MCF 10A (cell line): ENCODE measurements at regions of chr10 and their contacts with region 1.

Region 1: DNA sequence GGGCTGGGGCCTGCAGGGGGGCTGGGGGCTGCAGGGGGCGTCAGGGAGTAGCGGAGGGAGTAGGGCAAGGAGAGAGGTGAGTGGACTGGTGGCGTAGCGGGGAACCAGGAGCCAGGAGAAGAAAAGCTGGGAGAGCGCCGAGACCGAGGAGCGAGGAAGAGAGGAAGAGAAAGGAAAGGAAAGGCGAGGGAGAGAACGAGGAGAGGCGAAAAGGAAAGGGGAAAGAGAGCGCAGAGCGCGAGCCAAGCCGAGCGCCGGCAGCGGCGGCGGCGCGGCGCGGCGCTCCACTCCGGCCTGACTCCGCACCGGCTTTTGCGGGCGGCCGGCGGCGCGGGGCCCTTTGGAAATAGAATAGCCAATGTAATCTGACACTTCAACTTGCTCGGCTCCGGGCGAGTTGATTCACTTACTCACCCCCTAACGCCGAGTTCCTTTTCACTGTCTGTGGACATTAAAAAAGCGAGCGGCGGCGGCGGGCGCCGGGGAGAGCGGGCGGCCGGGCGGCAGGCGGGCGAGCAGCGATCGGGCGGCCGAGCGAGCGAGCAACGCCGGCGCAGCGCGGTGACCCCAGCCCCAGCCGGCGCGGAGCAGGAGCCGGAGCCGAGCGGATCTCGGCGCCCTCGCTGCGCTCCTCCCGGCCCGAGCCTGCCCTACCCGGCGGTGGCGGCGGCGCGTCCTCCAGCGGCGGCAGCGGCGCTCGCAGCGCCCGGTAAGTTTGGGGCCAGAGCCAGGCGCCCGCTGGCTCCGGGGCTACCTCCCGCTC is at the start of gene ZMIZ1:
- DNase-seq: peak; percentile 95
- H3K4me3 Mint-ChIP-seq: peak within 1 kb of the TSS; percentile 84
- H3K27ac Mint-ChIP-seq: peak within 1 kb of the TSS; percentile 50
- H3K4me1 Mint-ChIP-seq: peaks cover 20% of the 10 kb centered on the region
- H3K27me3 Mint-ChIP-seq: no peaks in the 10 kb centered on the region
- CTCF ChIP-seq: peak; percentile 19
- total RNA-seq, gene ZMIZ1: 15.5 and 20.3 TPM in 2 replicates

Region 2: DNA sequence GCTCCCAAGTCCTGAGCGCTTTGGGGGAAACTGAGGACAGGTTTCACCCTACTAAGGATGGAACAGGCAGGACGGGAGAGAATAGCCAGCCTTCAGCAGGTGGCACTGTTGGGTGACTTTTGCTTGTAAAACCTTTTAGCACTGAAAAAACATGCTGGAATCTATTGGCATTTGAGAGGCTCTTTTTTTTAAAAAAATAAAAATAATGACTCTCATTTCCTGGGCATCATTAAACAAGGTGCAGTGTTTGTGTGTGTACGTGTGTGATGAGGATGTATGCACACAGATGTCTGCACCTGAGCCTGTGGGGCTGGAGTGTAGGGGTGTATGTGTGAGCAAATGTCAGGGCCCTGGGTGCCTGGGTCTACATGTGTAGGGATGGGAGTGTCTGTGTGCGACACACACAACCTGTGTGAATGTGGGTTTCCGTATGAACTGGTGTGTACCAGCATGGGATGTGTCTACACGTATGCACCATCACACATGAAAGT is 857.1 kb before region 1 on chr10:
- CTCF ChIA-PET with region 1: interaction called, 3 read pairs
- POLR2A ChIA-PET with region 1: interaction called, 3 read pairs
- intact Hi-C with region 1: loop called (anchors 2 kb)
- DNase-seq: peak; percentile 59
- H3K4me3 Mint-ChIP-seq: no peak overlapping the region
- H3K27ac Mint-ChIP-seq: peak overlapping the region; percentile 64
- H3K4me1 Mint-ChIP-seq: peaks cover 10% of the 10 kb centered on the region
- H3K27me3 Mint-ChIP-seq: peaks cover 34% of the 10 kb centered on the region
- CTCF ChIP-seq: peak; percentile 62

Region 3: DNA sequence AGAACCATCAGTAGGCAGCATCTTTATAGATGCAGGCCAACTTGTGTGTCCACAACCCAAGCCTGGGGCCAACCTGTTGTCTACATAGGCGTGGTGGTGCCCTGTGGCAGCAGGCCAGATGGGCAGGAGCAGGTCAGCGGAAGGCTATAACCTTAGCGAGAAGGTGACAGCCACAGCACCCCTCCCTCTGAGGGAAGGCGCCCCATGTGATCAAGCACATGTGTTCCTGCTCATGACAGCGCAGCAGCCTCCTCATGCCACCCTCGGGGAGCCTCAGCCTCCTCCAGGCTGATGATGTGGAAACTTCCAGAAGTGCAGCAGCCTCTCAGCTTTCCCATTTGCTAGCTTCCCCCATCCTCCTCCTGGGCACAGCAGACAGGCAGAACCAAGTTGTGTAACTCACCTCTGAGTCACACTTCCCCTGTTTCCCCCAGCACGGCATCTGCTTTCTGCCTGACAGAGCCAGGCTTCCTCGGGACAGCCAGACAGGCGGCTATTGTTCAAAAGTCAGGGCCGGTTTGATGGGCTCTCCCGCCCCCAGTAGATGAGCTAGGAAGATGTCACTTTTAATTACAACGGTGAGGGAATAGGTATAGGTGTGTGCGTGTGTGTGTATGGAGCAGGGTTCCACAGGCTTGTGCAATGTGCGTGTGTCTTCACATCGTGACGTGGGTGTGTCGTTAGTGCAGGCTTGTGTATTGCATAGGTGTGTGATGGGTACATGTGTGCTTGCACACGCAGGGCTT is 312.0 kb before region 1 on chr10:
- CTCF ChIA-PET with region 1: no interaction called
- POLR2A ChIA-PET with region 1: interaction called, 5 read pairs
- intact Hi-C with region 1: loop called (anchors 2 kb)
- DNase-seq: peak; percentile 98
- H3K4me3 Mint-ChIP-seq: peak overlapping the region; percentile 41
- H3K27ac Mint-ChIP-seq: peak overlapping the region; percentile 74
- H3K4me1 Mint-ChIP-seq: peaks cover 26% of the 10 kb centered on the region
- H3K27me3 Mint-ChIP-seq: peaks cover 26% of the 10 kb centered on the region
- CTCF ChIP-seq: no peak

Region 4: GRCh38 chr10:78953113-78953798 is 115.5 kb before region 1 on chr10:
- CTCF ChIA-PET with region 1: interaction called, 5 read pairs
- POLR2A ChIA-PET with region 1: interaction called, 14 read pairs
- intact Hi-C with region 1: no loop called
- DNase-seq: no peak
- H3K4me3 Mint-ChIP-seq: no peak overlapping the region
- H3K27ac Mint-ChIP-seq: no peak overlapping the region
- H3K4me1 Mint-ChIP-seq: peaks cover 39% of the 10 kb centered on the region
- H3K27me3 Mint-ChIP-seq: no peaks in the 10 kb centered on the region
- CTCF ChIP-seq: no peak

Region 5: DNA sequence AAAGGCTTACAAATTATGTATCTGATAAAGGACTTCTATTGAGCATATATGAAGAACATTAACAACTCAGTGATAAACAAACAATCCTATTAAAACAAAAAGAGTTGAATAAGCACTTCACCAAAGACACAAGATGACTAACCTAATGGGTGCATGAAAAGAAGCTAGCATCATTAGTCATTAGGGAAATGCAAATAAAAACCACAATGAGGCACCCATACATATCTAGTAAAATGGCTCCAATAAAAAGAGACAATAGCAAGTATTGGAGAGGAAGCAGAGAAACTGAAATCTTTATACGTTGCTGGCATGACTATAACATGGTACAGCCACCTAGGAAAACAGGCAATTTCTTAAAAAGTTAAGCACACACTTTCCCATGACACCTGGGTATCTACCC is 77.6 kb before region 1 on chr10:
- CTCF ChIA-PET with region 1: no interaction called
- POLR2A ChIA-PET with region 1: no interaction called
- intact Hi-C with region 1: no loop called
- DNase-seq: peak; percentile 35
- H3K4me3 Mint-ChIP-seq: no peak overlapping the region
- H3K27ac Mint-ChIP-seq: no peak overlapping the region
- H3K4me1 Mint-ChIP-seq: peaks cover 12% of the 10 kb centered on the region
- H3K27me3 Mint-ChIP-seq: no peaks in the 10 kb centered on the region
- CTCF ChIP-seq: no peak

Region 6: DNA sequence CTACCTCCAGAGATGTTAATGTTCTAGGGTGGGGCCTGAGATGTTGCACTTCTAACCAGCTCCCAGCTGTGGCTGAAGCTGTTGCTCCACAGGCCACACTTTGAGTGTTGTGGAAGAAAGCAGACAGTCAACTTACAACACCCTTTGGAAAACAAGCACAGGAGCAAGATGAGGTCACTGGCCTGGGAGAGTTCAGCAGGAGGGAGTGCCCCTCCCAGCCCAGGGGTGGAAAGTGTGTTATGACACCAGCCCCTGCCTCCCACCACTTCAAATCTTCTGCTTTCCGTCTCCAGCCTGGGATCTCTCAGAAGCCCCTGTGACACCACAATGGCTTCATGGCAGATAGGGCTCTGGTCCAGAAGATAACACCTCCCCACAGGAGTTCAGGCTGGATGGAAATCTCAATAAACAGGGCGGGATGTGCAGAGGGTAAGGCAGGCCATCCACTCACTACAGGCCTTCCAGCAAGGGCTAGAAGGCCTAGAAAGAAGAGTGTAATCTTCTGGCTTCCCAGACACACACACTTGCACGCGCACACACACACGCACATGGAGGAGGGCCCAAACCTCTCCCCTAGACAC is 48.7 kb before region 1 on chr10:
- CTCF ChIA-PET with region 1: no interaction called
- POLR2A ChIA-PET with region 1: interaction called, 11 read pairs
- intact Hi-C with region 1: no loop called
- DNase-seq: peak; percentile 52
- H3K4me3 Mint-ChIP-seq: no peak overlapping the region
- H3K27ac Mint-ChIP-seq: peak overlapping the region; percentile 29
- H3K4me1 Mint-ChIP-seq: peaks cover 14% of the 10 kb centered on the region
- H3K27me3 Mint-ChIP-seq: no peaks in the 10 kb centered on the region
- CTCF ChIP-seq: no peak

Region 7: DNA sequence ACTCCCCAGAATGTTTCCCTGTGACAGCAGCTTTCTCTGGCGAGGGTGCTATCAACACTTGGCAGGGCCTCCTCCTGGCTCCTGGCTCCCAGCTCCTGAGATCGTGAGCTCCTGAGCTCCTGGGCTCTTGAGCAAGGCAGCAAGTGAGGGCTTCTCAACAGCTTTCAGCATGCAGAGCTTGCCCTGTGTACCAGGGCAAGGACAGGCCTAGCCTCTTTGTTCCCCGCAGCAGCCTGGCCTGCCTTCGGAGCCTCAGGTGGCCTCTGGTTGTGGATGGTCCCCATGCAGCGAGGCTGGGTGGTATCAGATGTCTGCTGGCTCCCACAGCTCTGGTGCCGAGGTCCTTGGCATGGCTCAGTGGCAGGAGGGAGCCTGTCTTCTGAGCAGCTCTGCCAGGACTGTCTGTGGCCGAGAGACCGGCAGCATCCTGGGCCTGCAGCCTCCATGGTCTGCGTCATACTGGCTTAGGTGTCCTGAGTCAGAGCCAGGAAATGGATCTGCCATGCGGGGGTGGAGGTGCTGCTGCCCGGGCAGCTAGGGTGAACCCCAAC is 44.2 kb after region 1 on chr10:
- CTCF ChIA-PET with region 1: interaction called, 4 read pairs
- POLR2A ChIA-PET with region 1: interaction called, 12 read pairs
- intact Hi-C with region 1: loop called (anchors 5 kb)
- DNase-seq: peak; percentile 93
- H3K4me3 Mint-ChIP-seq: no peak overlapping the region
- H3K27ac Mint-ChIP-seq: peak overlapping the region; percentile 93
- H3K4me1 Mint-ChIP-seq: peaks cover 56% of the 10 kb centered on the region
- H3K27me3 Mint-ChIP-seq: no peaks in the 10 kb centered on the region
- CTCF ChIP-seq: no peak

Region 8: GRCh38 chr10:79162861-79163665 is 94.3 kb after region 1 on chr10:
- CTCF ChIA-PET with region 1: interaction called, 4 read pairs
- POLR2A ChIA-PET with region 1: interaction called, 4 read pairs
- intact Hi-C with region 1: loop called (anchors 2 kb)
- DNase-seq: peak; percentile 86
- H3K4me3 Mint-ChIP-seq: no peak overlapping the region
- H3K27ac Mint-ChIP-seq: peak overlapping the region; percentile 43
- H3K4me1 Mint-ChIP-seq: peaks cover 22% of the 10 kb centered on the region
- H3K27me3 Mint-ChIP-seq: no peaks in the 10 kb centered on the region
- CTCF ChIP-seq: no peak